ENCODE measurements at regions of chr10 and their contacts with region 1.

Region 1: DNA sequence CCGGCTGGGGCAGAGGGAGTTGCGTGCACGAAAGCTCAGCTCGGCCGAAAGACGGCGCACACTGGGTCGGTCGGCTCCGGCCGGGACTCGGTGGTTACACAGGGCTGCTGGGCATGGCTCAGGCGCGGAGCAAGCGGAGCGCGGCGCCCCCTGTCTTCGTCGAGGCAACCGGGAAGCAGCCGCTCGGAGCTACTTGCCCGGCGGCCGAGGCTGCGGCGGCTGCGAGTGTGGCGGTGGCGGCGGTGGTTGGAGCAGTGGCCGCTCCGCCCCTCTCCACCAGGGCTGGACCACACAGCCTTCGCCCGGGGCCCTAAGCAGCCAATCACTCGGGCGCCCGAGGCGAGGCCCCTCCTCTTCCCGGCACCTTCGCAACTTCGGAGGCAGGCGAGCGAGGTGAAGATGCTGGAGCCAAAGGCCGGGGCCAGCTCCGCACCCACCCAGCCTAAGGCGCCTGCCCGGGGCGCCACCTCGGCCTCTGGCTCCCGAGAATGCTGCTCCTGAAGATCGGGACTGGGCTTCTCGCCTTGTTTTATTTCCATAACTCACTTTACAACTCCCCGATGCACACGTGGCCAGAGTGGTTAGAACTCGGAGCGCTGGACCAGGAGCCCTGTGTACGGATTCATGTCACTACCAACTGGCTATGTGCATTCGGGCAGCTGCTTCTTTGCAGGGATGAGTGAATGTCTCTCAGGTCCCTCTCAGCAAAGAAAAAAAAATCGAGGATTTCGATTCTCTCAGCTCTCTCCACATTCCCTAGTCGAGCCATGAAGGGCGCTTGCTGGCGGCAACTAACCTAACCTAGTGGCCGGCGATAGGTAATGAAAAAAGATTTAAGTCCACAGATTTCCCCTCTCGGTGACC is at the start of gene TLL2:
- DNase-seq: peak; percentile 85 to 92
- H3K4me3 ChIP-seq: peak within 1 kb of the TSS; percentile 32 to 71 (median 66)
- H3K27ac ChIP-seq: no peak within 1 kb of the TSS; the same call in 1 of the 2 replicates
- H3K4me1 ChIP-seq: peaks cover 12 to 16% (median 13%) of the 10 kb centered on the region in 4 experiments
- H3K27me3 ChIP-seq: peaks cover 10 to 29% (median 25%) of the 10 kb centered on the region in 4 experiments
- CTCF ChIP-seq: peak; percentile 60 to 84 (median 73)
- EP300 ChIP-seq: peak in 1 of 2 experiments; percentile 66; a peak in 1 of 3 replicates
- POLR2A ChIP-seq: peak in 1 of 2 experiments; percentile 60; a peak in 1 of 3 replicates
- RAD21 ChIP-seq: peak; percentile 50 to 68
- total RNA-seq, gene TLL2: 3.0 and 3.2 TPM in 2 replicates

Region 2: GRCh38 chr10:96395931-96396877 is 117.7 kb before region 1 on chr10:
- CTCF ChIA-PET with region 1: interaction called, 152 read pairs
- POLR2A ChIA-PET with region 1: interaction called, 3 read pairs
- DNase-seq: peak; percentile 56 to 79
- H3K4me3 ChIP-seq: peak overlapping the region; percentile 10 to 49 (median 22); a peak in 4 of 8 replicates
- H3K27ac ChIP-seq: no peak overlapping the region
- H3K4me1 ChIP-seq: peaks cover 0 to 6% (median 2%) of the 10 kb centered on the region in 4 experiments; a peak in 6 of 7 replicates
- H3K27me3 ChIP-seq: no peaks in the 10 kb centered on the region; a peak in 2 of 7 replicates
- CTCF ChIP-seq: peak; percentile 88 to 91 (median 89)
- EP300 ChIP-seq: no peak
- POLR2A ChIP-seq: no peak
- RAD21 ChIP-seq: peak; percentile 91 to 92

Region 3: DNA sequence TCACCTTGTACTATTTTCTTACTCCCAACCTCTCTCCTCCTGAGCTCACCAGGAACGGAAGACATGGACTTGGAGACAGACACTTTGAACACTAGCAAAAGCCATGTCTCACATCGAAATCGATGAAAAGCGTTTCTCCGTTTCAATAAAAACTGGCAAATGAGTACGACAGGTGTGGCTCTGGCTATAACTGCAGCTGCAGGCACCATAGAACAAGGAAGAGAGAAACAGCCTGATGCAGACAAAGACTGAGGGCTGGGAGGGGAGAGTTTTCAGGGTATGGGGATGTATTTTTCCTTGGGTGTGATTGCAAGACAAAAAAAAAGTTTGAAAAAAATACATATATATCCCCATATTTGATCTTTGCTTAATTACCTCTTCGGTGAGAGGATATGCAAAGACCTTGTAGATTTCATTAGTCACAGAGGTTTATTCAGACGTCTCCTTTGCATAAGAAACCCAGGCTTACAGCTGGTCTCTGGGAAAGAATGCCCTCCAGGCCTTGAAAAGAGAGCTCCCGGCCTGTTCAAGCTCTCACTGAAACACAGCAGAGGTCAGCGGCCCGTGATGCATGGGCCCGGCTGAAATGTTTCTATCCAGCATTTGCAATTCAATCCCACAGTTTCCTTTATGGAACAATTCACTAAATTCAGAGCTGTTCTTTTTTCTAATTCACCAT is 63.3 kb before region 1 on chr10:
- CTCF ChIA-PET with region 1: interaction called, 10 read pairs
- POLR2A ChIA-PET with region 1: interaction called, 3 read pairs
- DNase-seq: peak; percentile 52 to 62
- H3K4me3 ChIP-seq: peak overlapping the region in 1 of 4 experiments; percentile 44; a peak in 2 of 8 replicates
- H3K27ac ChIP-seq: peak overlapping the region; percentile 84
- H3K4me1 ChIP-seq: peaks cover 25 to 34% (median 30%) of the 10 kb centered on the region in 4 experiments
- H3K27me3 ChIP-seq: no peaks in the 10 kb centered on the region
- CTCF ChIP-seq: no peak
- EP300 ChIP-seq: no peak
- POLR2A ChIP-seq: 0 out of 3 replicates have a peak, but pooled peaks of 1 of the 2 experiments have one; percentile 39
- RAD21 ChIP-seq: no peak

Region 4: DNA sequence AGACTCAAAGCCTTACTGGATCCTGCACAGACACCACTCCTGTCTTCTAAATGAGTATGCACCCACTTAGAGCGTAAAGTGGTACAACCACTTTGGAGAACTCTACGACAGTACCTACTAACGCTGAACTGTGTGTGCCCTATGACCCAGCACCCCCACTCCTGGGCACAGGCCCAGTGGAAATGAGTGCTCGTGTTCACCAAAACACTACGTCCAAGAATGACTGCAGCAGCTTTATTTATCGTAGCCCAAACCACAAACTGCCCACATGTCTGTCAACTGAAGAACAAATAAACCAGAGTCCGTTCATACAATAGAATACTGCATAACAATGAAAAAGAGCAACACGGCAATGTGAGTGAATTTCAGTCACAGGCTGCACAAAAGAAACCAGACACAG is 35.6 kb before region 1 on chr10:
- CTCF ChIA-PET with region 1: interaction called, 12 read pairs
- POLR2A ChIA-PET with region 1: interaction called, 3 read pairs
- DNase-seq: no peak
- H3K4me3 ChIP-seq: no peak overlapping the region
- H3K27ac ChIP-seq: no peak overlapping the region
- H3K4me1 ChIP-seq: peaks cover 0 to 2% (median 0%) of the 10 kb centered on the region in 4 experiments; a peak in 1 of 7 replicates
- H3K27me3 ChIP-seq: no peaks in the 10 kb centered on the region
- CTCF ChIP-seq: no peak
- EP300 ChIP-seq: no peak
- POLR2A ChIP-seq: no peak
- RAD21 ChIP-seq: no peak

Region 5: DNA sequence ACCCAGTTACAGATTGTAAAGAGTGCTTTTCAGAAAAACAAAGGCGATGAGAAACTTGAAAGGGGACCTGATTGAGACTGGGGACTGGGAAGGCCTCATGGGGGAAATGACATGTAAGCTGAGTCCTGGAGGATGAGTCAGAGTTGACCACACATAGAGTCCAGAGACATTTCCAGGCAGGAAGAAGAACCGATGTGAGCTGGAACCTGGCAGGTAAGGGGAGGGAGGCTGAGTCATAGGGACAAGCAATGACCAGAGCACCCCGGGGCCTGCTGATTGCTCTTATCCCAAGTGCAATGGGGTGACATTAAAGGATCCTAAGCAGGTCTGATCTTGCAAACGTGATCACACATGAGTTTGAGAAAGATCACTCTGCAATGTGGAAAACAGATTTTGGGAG is 11.9 kb before region 1 on chr10:
- CTCF ChIA-PET with region 1: interaction called, 276 read pairs
- POLR2A ChIA-PET with region 1: interaction called, 7 read pairs
- DNase-seq: no peak
- H3K4me3 ChIP-seq: no peak overlapping the region
- H3K27ac ChIP-seq: no peak overlapping the region
- H3K4me1 ChIP-seq: 0 out of 7 replicates have a peak, but pooled peaks cover 0 to 3% (median 0%) of the 10 kb centered on the region in 4 experiments
- H3K27me3 ChIP-seq: no peaks in the 10 kb centered on the region; a peak in 1 of 7 replicates
- CTCF ChIP-seq: no peak
- EP300 ChIP-seq: no peak
- POLR2A ChIP-seq: no peak
- RAD21 ChIP-seq: no peak

Region 6: DNA sequence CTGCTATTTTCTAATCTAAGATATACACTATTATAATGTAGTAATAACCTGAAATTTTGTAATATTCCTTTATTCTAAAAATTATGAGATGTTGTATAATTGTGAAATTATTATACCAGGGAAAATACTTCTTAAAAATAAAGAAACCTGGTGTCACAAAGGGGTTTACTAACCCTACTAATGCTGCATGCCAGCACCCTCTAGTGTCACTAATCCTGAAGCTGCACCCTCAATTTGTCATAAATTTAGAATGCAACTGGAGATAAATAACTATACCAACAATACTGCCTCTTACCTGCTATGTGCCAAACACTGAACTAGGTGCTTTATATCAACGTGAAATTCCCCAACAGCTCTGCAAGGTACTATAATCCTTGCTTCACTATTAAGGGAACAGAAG is 42.1 kb after region 1 on chr10:
- CTCF ChIA-PET with region 1: interaction called, 14 read pairs
- POLR2A ChIA-PET with region 1: interaction called, 3 read pairs
- DNase-seq: no peak
- H3K4me3 ChIP-seq: no peak overlapping the region
- H3K27ac ChIP-seq: no peak overlapping the region
- H3K4me1 ChIP-seq: no peaks in the 10 kb centered on the region
- H3K27me3 ChIP-seq: no peaks in the 10 kb centered on the region
- CTCF ChIP-seq: peak in 2 of 3 experiments; percentile 44 to 45; a peak in 3 of 4 replicates
- EP300 ChIP-seq: no peak
- POLR2A ChIP-seq: no peak
- RAD21 ChIP-seq: peak; percentile 55 to 65

Measured in H1 (cell line).